ENCODE measurements at regions of chr6 and their contacts with region 1.

Region 1: DNA sequence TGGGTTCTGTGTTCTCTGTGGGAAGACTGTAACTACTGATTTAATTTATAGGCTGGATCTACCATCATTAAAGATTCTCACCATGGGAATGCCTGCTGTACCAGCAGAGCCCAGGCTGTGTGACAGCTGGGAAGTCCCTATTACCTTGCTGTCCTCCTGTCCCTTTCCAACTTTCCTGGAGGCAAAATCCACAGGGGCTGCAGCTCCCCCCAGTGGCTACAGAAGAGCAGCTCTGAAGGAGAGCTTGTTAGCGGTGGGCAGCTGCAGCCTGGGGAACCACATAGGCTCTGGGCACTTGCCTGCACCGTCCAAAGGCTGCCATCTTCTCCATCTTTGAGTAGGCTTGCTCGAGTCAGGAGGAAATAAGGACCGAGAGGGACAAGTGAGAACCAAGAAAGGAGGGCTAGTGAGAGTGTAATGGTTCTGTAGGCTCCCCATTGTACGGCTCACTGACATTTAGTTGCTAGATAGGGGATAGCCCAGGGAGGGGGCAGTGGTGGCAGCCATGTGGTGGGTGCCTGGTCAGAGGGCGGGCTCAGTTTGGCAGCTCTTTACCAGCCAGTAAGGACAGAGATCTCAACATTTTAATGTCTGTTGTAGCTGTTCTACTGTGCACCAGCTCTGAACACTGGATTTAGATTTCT is 155.1 kb upstream of the MLIP start:
- DNase-seq: peak; percentile 79
- ATAC-seq: peak; percentile 100
- H3K4me3 ChIP-seq: no peak overlapping the region
- H3K27ac ChIP-seq: no peak overlapping the region
- H3K4me1 ChIP-seq: no peaks in the 10 kb centered on the region
- H3K27me3 ChIP-seq: no peaks in the 10 kb centered on the region; a peak in 1 of 5 replicates
- CTCF ChIP-seq: peak; percentile 98
- EP300 ChIP-seq: no peak
- POLR2A ChIP-seq: no peak
- RAD21 ChIP-seq: peak; percentile 92

Region 2: GRCh38 chr6:53718597-53719460 is 237.4 kb before region 1 on chr6:
- CTCF ChIA-PET with region 1: interaction called, 29 read pairs
- POLR2A ChIA-PET with region 1: no interaction called
- in situ Hi-C with region 1: no loop called
- intact Hi-C with region 1: loop called (anchors 1 kb)
- DNase-seq: peak; percentile 72
- ATAC-seq: peak; percentile 89
- H3K4me3 ChIP-seq: no peak overlapping the region
- H3K27ac ChIP-seq: no peak overlapping the region
- H3K4me1 ChIP-seq: peaks cover 22% of the 10 kb centered on the region
- H3K27me3 ChIP-seq: no peaks in the 10 kb centered on the region; a peak in 1 of 5 replicates
- CTCF ChIP-seq: peak; percentile 88
- EP300 ChIP-seq: no peak
- POLR2A ChIP-seq: no peak
- RAD21 ChIP-seq: no peak

Region 3: GRCh38 chr6:53725791-53726431 is 230.3 kb before region 1 on chr6:
- CTCF ChIA-PET with region 1: interaction called, 13 read pairs
- POLR2A ChIA-PET with region 1: interaction called, 4 read pairs
- in situ Hi-C with region 1: loop called (anchors 5 kb)
- intact Hi-C with region 1: loop called (anchors 1 kb)
- DNase-seq: peak; percentile 72
- ATAC-seq: peak; percentile 94
- H3K4me3 ChIP-seq: no peak overlapping the region
- H3K27ac ChIP-seq: no peak overlapping the region
- H3K4me1 ChIP-seq: peaks cover 17% of the 10 kb centered on the region; the same call in 1 of the 2 replicates
- H3K27me3 ChIP-seq: no peaks in the 10 kb centered on the region
- CTCF ChIP-seq: peak; percentile 95
- EP300 ChIP-seq: no peak
- POLR2A ChIP-seq: no peak
- RAD21 ChIP-seq: peak; percentile 82

Region 4: GRCh38 chr6:53734473-53735299 is 221.5 kb before region 1 on chr6:
- CTCF ChIA-PET with region 1: no interaction called
- POLR2A ChIA-PET with region 1: no interaction called
- in situ Hi-C with region 1: loop called (anchors 5 kb)
- intact Hi-C with region 1: no loop called
- DNase-seq: peak; percentile 31
- ATAC-seq: peak; percentile 95
- H3K4me3 ChIP-seq: no peak overlapping the region
- H3K27ac ChIP-seq: no peak overlapping the region
- H3K4me1 ChIP-seq: peaks cover 15% of the 10 kb centered on the region
- H3K27me3 ChIP-seq: no peaks in the 10 kb centered on the region
- CTCF ChIP-seq: peak; percentile 68
- EP300 ChIP-seq: no peak
- POLR2A ChIP-seq: no peak
- RAD21 ChIP-seq: no peak

Measured in HepG2 (cell line).